ENCODE measurements at regions of chr2 and their contacts with region 1.

Region 1: GRCh38 chr2:137910641-137911040 is 53.6 kb upstream of the HNMT start:
- DNase-seq: peak; percentile 55
- ATAC-seq: no peak
- H3K4me3 ChIP-seq: no peak overlapping the region
- H3K27ac ChIP-seq: no peak overlapping the region
- H3K4me1 ChIP-seq: peaks cover 42% of the 10 kb centered on the region
- H3K27me3 ChIP-seq: no peaks in the 10 kb centered on the region
- CTCF ChIP-seq: peak; percentile 66
- EP300 ChIP-seq: peak in 1 of 2 experiments; percentile 30; a peak in 1 of 4 replicates
- POLR2A ChIP-seq: no peak
- RAD21 ChIP-seq: peak; percentile 84

Region 2: DNA sequence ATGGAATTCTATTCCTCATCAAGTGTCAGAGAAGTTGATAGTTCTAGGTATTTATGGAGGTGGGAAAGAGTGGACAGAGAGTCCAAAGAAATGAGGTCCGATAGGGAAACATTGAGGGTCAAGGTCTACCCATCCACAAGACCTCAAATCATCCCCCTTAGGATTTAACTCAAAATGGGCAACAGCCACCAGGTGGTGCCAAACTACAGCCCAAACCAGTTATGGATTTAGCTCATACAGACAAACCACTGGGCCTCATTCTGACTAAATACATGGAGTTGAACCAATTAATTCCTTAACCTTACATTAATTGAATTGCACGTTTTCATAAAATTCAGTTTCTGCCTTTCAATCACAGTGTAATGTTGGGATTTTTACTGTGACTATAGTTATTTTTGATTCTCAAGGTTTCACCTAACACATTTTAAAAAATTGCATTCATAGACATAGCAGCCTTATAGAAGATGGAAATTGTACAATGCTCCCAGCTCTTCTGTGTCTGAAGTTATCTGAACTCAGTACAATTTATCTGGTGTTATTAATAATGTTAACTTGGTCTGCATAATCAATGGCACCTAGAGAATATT is 44.6 kb before region 1 on chr2:
- CTCF ChIA-PET with region 1: no interaction called
- POLR2A ChIA-PET with region 1: no interaction called
- in situ Hi-C with region 1: no loop called
- intact Hi-C with region 1: loop called (anchors 2 kb)
- DNase-seq: peak; percentile 77
- ATAC-seq: peak; percentile 98
- H3K4me3 ChIP-seq: no peak overlapping the region
- H3K27ac ChIP-seq: no peak overlapping the region
- H3K4me1 ChIP-seq: no peaks in the 10 kb centered on the region
- H3K27me3 ChIP-seq: no peaks in the 10 kb centered on the region
- CTCF ChIP-seq: peak; percentile 92
- EP300 ChIP-seq: no peak
- POLR2A ChIP-seq: no peak
- RAD21 ChIP-seq: peak; percentile 84

Region 3: GRCh38 chr2:138090330-138090729 is 179.7 kb after region 1 on chr2:
- CTCF ChIA-PET with region 1: interaction called, 18 read pairs
- POLR2A ChIA-PET with region 1: no interaction called
- in situ Hi-C with region 1: loop called (anchors 5 kb)
- intact Hi-C with region 1: loop called (anchors 1 kb)
- DNase-seq: peak; percentile 64
- ATAC-seq: peak; percentile 97
- H3K4me3 ChIP-seq: no peak overlapping the region
- H3K27ac ChIP-seq: no peak overlapping the region
- H3K4me1 ChIP-seq: peaks cover 8% of the 10 kb centered on the region
- H3K27me3 ChIP-seq: no peaks in the 10 kb centered on the region
- CTCF ChIP-seq: peak; percentile 79
- EP300 ChIP-seq: no peak
- POLR2A ChIP-seq: no peak
- RAD21 ChIP-seq: peak; percentile 84